GM12878 (cell line): ENCODE measurements at regions of chr2 and their contacts with region 1.

Region 1: GRCh38 chr2:38610851-38611801 is 8.4 kb upstream of the HNRNPLL start:
- DNase-seq: peak; percentile 52
- ATAC-seq: peak; percentile 87
- H3K4me3 ChIP-seq: no peak overlapping the region
- H3K27ac ChIP-seq: no peak overlapping the region
- H3K4me1 ChIP-seq: peaks cover 26% of the 10 kb centered on the region
- H3K27me3 ChIP-seq: no peaks in the 10 kb centered on the region; a peak in 1 of 4 replicates
- CTCF ChIP-seq: no peak
- EP300 ChIP-seq: peak; percentile 39 to 86; a peak in 2 of 4 replicates
- POLR2A ChIP-seq: no peak
- RAD21 ChIP-seq: no peak

Region 2: GRCh38 chr2:38508311-38509039 is 102.7 kb before region 1 on chr2:
- CTCF ChIA-PET with region 1: no interaction called
- POLR2A ChIA-PET with region 1: no interaction called
- RAD21 ChIA-PET with region 1: no interaction called
- SMC1A ChIA-PET with region 1: no interaction called
- in situ Hi-C with region 1: no loop called
- intact Hi-C with region 1: no loop called
- DNase-seq: peak; percentile 45
- ATAC-seq: peak; percentile 98
- H3K4me3 ChIP-seq: no peak overlapping the region
- H3K27ac ChIP-seq: no peak overlapping the region
- H3K4me1 ChIP-seq: no peaks in the 10 kb centered on the region
- H3K27me3 ChIP-seq: no peaks in the 10 kb centered on the region
- CTCF ChIP-seq: peak; percentile 72 to 85 (median 80); a peak in 5 of 6 replicates
- EP300 ChIP-seq: no peak
- POLR2A ChIP-seq: no peak
- RAD21 ChIP-seq: peak; percentile 98

Region 3: GRCh38 chr2:38634684-38635083 is 23.6 kb after region 1 on chr2:
- CTCF ChIA-PET with region 1: no interaction called
- POLR2A ChIA-PET with region 1: interaction called, 6 read pairs
- RAD21 ChIA-PET with region 1: interaction called, 4 read pairs
- SMC1A ChIA-PET with region 1: interaction called, 4 read pairs
- in situ Hi-C with region 1: no loop called
- intact Hi-C with region 1: loop called (anchors 2 kb)
- DNase-seq: peak; percentile 48
- ATAC-seq: peak; percentile 89
- H3K4me3 ChIP-seq: 0 out of 2 replicates have a peak overlapping the region, but pooled peaks have one; percentile 42
- H3K27ac ChIP-seq: no peak overlapping the region; the same call in none of the 2 replicates
- H3K4me1 ChIP-seq: peaks cover 24% of the 10 kb centered on the region
- H3K27me3 ChIP-seq: no peaks in the 10 kb centered on the region
- CTCF ChIP-seq: no peak
- EP300 ChIP-seq: peak; percentile 87 to 93
- POLR2A ChIP-seq: no peak
- RAD21 ChIP-seq: peak; percentile 12; the same call in 1 of the 2 replicates

Region 4: DNA sequence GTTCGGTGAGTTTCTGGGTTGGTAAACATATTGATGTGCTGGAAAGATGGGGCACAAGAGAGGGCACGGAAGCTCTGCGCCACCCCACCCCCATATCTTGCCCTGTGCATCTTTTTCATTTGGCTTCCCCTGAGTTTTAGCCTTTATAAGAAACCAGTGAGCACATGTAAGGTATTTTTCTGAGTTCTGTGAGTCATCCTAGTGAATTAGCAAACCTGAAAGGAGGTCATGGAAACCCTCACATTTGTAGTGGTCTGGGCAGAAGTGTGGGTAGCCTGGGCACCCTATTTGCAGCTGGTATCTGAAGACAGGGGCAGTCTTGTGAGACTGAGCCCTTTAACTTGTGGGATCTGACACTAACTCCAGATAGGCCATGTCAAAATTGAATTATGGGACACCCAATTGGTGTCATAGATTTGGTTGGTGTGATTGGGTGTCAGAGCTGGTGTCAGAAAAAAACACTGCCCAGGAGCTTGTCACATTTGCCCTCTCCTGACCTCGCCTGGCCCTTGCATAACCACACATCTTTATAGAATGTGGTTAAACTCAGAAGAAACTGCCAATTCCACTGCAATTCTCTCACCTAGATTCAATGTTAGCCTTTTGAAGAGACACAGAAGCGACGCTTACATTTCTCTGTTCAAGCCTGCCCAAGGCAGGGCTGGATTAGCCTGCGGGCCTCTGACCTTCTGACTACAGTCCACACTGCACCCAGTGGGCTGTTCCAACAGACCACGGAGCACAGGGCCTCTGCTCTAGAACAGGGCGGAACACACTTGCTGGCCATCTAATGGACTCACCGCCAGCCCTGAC is 42.8 kb after region 1 on chr2:
- CTCF ChIA-PET with region 1: interaction called, 3 read pairs
- POLR2A ChIA-PET with region 1: interaction called, 4 read pairs
- RAD21 ChIA-PET with region 1: interaction called, 16 read pairs
- SMC1A ChIA-PET with region 1: interaction called, 17 read pairs
- in situ Hi-C with region 1: no loop called
- intact Hi-C with region 1: loop called (anchors 5 kb)
- DNase-seq: peak; percentile 48
- ATAC-seq: peak; percentile 86
- H3K4me3 ChIP-seq: no peak overlapping the region
- H3K27ac ChIP-seq: no peak overlapping the region
- H3K4me1 ChIP-seq: peaks cover 23% of the 10 kb centered on the region
- H3K27me3 ChIP-seq: no peaks in the 10 kb centered on the region
- CTCF ChIP-seq: no peak
- EP300 ChIP-seq: no peak
- POLR2A ChIP-seq: no peak
- RAD21 ChIP-seq: no peak

Region 5: DNA sequence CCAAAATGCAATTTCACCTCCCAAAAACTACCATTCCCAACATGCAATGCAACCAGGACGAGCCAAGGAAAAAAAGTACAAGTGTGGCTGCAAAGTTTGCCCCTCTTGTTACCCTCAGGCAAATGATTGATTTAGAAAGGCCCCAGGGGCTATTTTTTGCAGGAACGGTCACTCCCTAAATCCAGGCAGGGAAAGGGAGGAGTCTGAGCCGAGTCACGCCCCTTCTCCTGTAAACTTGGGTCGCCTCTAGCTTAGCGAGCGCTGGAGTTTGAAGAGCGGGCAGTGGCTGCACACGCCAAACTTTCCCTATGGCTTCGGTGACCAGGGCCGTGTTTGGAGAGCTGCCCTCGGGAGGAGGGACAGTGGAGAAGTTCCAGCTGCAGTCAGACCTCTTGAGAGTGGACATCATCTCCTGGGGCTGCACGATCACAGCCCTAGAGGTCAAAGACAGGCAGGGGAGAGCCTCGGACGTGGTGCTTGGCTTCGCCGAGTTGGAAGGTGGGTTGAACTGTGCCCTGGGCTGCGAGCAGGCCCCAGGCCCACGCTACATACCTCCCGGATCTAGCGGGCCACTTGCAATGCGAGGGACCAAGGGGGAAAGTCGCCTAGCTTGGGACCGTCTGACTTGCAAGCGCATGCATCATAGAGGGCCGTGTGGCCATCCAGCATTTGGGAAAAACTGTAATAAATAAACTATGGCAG is 54.9 kb after region 1 on chr2 and contains the start of gene GALM:
- CTCF ChIA-PET with region 1: interaction called, 30 read pairs
- POLR2A ChIA-PET with region 1: interaction called, 4 read pairs
- RAD21 ChIA-PET with region 1: interaction called, 8 read pairs
- SMC1A ChIA-PET with region 1: interaction called, 27 read pairs
- in situ Hi-C with region 1: no loop called
- intact Hi-C with region 1: no loop called
- DNase-seq: no peak
- ATAC-seq: peak; percentile 55
- H3K4me3 ChIP-seq: peak within 1 kb of the TSS; percentile 56; the same call in 1 of the 2 replicates
- H3K27ac ChIP-seq: peak within 1 kb of the TSS; percentile 33; the same call in 1 of the 2 replicates
- H3K4me1 ChIP-seq: peaks cover 28% of the 10 kb centered on the region
- H3K27me3 ChIP-seq: no peaks in the 10 kb centered on the region
- CTCF ChIP-seq: no peak
- EP300 ChIP-seq: no peak
- POLR2A ChIP-seq: no peak
- RAD21 ChIP-seq: no peak
- polyA plus RNA-seq, gene GALM: 1.5 to 1.7 TPM

Region 6: GRCh38 chr2:38709567-38710194 is 98.6 kb after region 1 on chr2:
- CTCF ChIA-PET with region 1: no interaction called
- POLR2A ChIA-PET with region 1: no interaction called
- RAD21 ChIA-PET with region 1: interaction called, 3 read pairs
- SMC1A ChIA-PET with region 1: interaction called, 13 read pairs
- in situ Hi-C with region 1: no loop called
- intact Hi-C with region 1: no loop called
- DNase-seq: peak; percentile 35
- ATAC-seq: peak; percentile 87
- H3K4me3 ChIP-seq: no peak overlapping the region
- H3K27ac ChIP-seq: no peak overlapping the region
- H3K4me1 ChIP-seq: peaks cover 16% of the 10 kb centered on the region
- H3K27me3 ChIP-seq: no peaks in the 10 kb centered on the region
- CTCF ChIP-seq: no peak
- EP300 ChIP-seq: peak in 1 of 2 experiments; percentile 47; a peak in 2 of 4 replicates
- POLR2A ChIP-seq: no peak
- RAD21 ChIP-seq: no peak

Region 7: DNA sequence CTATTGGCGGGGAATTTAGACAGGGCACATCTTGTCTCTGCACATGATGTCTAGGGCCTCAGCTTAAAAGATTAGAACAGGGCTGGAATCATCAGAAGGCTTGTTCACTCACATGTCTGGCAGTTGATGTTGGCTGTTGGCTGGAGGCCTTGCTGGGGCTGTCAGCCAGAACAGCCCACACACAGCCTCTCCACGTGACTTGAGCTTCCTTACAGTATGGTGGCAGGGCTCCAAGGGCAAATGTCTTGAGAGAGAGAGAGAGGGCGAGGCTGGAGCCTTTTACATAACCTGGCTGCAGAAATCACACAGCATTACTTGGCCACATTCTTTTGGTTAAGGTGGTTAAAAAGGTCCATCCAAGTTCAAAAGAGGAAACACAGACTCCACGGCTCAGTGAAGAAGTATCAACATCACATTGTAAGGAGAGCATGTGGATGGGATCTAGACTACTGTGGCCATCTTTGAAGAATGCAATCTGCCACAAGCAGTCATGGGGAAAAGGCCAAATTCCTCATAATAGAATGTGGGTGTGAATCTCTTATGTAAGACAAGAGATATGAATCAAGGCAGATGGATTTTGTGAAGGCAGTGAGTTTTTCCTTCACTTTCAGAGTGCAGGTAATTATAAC is 109.6 kb after region 1 on chr2:
- CTCF ChIA-PET with region 1: interaction called, 177 read pairs
- POLR2A ChIA-PET with region 1: interaction called, 13 read pairs
- RAD21 ChIA-PET with region 1: interaction called, 140 read pairs
- SMC1A ChIA-PET with region 1: interaction called, 108 read pairs
- in situ Hi-C with region 1: loop called (anchors 5 kb)
- intact Hi-C with region 1: no loop called
- DNase-seq: peak; percentile 40
- ATAC-seq: peak; percentile 56
- H3K4me3 ChIP-seq: no peak overlapping the region
- H3K27ac ChIP-seq: no peak overlapping the region
- H3K4me1 ChIP-seq: peaks cover 33% of the 10 kb centered on the region
- H3K27me3 ChIP-seq: no peaks in the 10 kb centered on the region
- CTCF ChIP-seq: no peak
- EP300 ChIP-seq: no peak; a peak in 1 of 4 replicates
- POLR2A ChIP-seq: no peak
- RAD21 ChIP-seq: no peak

Region 8: DNA sequence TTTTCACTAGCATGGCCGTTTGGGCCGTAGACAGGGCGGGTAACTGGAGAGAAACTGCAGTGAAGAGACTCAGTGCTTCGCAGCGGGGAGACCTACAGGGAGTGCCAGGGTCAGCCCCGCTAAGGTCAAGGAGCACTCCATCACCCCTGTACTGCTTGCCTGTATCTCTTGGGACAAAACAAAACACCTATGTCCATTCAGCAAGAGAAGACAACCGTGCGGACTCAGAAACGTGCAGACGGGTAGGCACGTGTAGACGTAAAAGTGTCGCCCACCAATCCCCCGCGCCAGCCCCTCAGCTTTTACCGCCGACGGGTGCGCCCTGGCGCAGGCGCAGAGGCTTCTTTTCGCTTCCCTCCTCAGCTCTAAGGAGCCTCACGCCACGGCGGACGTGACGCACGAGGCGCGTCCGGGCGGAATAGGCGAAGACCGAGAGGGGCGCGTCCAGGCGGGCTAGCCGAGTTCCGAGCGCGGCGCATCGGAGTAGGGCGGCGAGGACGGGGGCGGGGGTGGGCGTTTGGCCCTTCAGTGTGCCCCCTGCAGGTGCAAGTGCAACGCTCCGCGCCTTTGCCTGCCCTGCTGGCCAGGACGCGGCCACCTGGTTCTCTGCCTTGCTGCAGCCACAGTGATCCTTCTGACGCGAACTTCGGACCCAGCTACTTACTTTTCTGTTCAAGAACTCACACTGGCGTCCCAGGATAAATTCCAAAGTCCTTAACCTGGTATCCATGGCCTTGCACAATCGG is 513.0 kb after region 1 on chr2:
- CTCF ChIA-PET with region 1: no interaction called
- POLR2A ChIA-PET with region 1: no interaction called
- RAD21 ChIA-PET with region 1: no interaction called
- SMC1A ChIA-PET with region 1: no interaction called
- in situ Hi-C with region 1: no loop called
- intact Hi-C with region 1: loop called (anchors 10 kb)
- DNase-seq: peak; percentile 89
- ATAC-seq: peak; percentile 77
- H3K4me3 ChIP-seq: peak overlapping the region; percentile 81
- H3K27ac ChIP-seq: peak overlapping the region; percentile 78
- H3K4me1 ChIP-seq: peaks cover 12% of the 10 kb centered on the region
- H3K27me3 ChIP-seq: no peaks in the 10 kb centered on the region
- CTCF ChIP-seq: peak; percentile 39 to 80 (median 58); a peak in 5 of 6 replicates
- EP300 ChIP-seq: peak; percentile 22 to 71; a peak in 2 of 4 replicates
- POLR2A ChIP-seq: peak; percentile 82
- RAD21 ChIP-seq: peak; percentile 36; the same call in 1 of the 2 replicates